Ovary (tissue), 10 donors: ENCODE measurements at regions of chr10 and their contacts with region 1.

Region 1: DNA sequence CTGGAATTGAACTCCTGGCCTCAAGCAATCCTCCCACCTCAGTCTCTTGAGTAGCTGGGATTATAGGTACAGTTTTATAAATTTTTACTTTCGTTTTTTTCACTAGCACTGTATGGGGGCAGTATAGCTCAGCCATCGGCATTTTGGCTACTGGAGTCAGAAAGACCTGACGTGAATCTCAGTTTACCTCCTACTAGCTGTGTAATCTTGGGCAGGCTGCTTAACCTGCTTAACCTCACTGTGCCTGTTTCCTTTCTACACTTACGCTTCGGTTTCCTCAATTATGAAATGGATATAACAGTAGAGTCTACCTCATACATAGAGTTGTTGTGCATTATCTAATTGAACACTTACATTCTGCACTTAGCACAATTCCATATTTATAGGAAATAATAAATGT is 16.7 kb downstream of the STN1 start:
- DNase-seq: no peak
- H3K4me3 ChIP-seq: no peak overlapping the region
- H3K27ac ChIP-seq: no peak overlapping the region
- H3K4me1 ChIP-seq: peaks cover 6% of the 10 kb centered on the region
- H3K27me3 ChIP-seq: no peaks in the 10 kb centered on the region
- CTCF ChIP-seq: no peak
- EP300 ChIP-seq: no peak
- POLR2A ChIP-seq: no peak

Region 2: GRCh38 chr10:103712570-103713498 is 188.5 kb before region 1 on chr10:
- intact Hi-C with region 1: no loop called
- DNase-seq: peak; percentile 74 to 91 (median 87)
- H3K4me3 ChIP-seq: no peak overlapping the region
- H3K27ac ChIP-seq: no peak overlapping the region
- H3K4me1 ChIP-seq: peaks cover 1% of the 10 kb centered on the region
- H3K27me3 ChIP-seq: no peaks in the 10 kb centered on the region
- CTCF ChIP-seq: peak; percentile 66 to 97 (median 95)
- EP300 ChIP-seq: no peak
- POLR2A ChIP-seq: no peak

Region 3: GRCh38 chr10:103966671-103967447 is 65.6 kb after region 1 on chr10 and contains the start of gene SLK:
- intact Hi-C with region 1: loop called in 1 of 4 experiments (anchors 10 kb)
- DNase-seq: peak; percentile 81 to 91 (median 87)
- H3K4me3 ChIP-seq: peak within 1 kb of the TSS; percentile 93
- H3K27ac ChIP-seq: peak within 1 kb of the TSS; percentile 96 to 99
- H3K4me1 ChIP-seq: peaks cover 4% of the 10 kb centered on the region
- H3K27me3 ChIP-seq: no peaks in the 10 kb centered on the region
- CTCF ChIP-seq: no peak
- EP300 ChIP-seq: no peak
- POLR2A ChIP-seq: peak; percentile 96
- total RNA-seq, gene SLK: 38.8 to 71.5 (median 43.8) TPM

Region 4: GRCh38 chr10:104337974-104338735 is 436.9 kb after region 1 on chr10 and contains the start of gene ITPRIP:
- intact Hi-C with region 1: loop called in 1 of 4 experiments (anchors 10 kb)
- DNase-seq: peak; percentile 77 to 83 (median 78)
- H3K4me3 ChIP-seq: peak within 1 kb of the TSS; percentile 92
- H3K27ac ChIP-seq: peak within 1 kb of the TSS; percentile 89 to 97
- H3K4me1 ChIP-seq: peaks cover 9% of the 10 kb centered on the region
- H3K27me3 ChIP-seq: no peaks in the 10 kb centered on the region
- CTCF ChIP-seq: peak in 2 of 3 donors; percentile 29 to 47
- EP300 ChIP-seq: no peak
- POLR2A ChIP-seq: peak; percentile 91
- total RNA-seq, gene ITPRIP: 15.7 to 38.1 (median 29.2) TPM